ENCODE measurements at regions of chr1 and their contacts with region 1.

Region 1: DNA sequence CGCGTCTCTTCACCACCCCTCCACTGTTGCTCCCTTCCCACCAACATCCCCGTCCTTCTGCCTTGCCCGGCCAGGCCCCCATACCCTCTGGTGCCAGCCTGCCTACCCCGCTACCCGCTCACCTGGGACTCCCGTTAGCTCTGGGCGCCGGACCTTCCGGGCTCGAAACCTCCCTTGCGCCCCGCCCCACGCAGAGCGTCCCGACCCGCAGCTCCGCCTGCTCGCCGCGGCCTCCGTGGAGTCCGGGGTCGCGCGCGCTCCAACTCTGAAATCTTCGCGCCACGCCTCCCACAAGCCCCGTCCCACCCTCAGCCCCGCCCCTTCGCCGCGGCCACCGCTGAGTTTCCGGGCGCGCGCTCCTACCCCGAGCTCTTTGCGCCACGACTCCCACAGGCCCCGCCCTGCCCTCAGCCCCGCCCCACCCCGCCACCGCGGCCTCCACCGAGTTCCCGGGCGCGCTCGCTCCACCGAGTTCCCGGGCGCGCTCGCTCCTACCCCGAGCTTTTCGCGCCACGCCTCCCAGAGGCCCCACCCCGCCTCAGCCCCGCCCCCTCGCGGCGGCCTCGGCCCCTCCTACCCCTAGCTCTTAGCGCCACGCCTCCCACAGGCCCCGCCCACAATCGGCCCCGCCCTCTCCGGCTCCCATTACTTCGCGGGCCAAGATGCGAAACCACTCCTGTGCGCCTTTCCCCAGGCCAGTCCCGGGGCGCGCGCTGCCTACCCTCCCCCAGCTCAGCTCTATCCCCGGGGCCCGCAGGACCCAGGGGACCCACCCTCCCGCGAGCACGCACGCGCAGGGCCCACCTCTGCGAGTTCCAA is at the start of gene IFT25:
- DNase-seq: peak; percentile 96 to 100 (median 99)
- H3K4me3 ChIP-seq: peak within 1 kb of the TSS; percentile 84
- H3K27ac ChIP-seq: peak within 1 kb of the TSS; percentile 88 to 89
- H3K4me1 ChIP-seq: peaks cover 11% of the 10 kb centered on the region
- H3K27me3 ChIP-seq: no peaks in the 10 kb centered on the region
- CTCF ChIP-seq: no peak
- EP300 ChIP-seq: no peak
- POLR2A ChIP-seq: peak; percentile 74
- total RNA-seq, gene IFT25: 24.2 to 39.3 (median 28.5) TPM

Region 2: DNA sequence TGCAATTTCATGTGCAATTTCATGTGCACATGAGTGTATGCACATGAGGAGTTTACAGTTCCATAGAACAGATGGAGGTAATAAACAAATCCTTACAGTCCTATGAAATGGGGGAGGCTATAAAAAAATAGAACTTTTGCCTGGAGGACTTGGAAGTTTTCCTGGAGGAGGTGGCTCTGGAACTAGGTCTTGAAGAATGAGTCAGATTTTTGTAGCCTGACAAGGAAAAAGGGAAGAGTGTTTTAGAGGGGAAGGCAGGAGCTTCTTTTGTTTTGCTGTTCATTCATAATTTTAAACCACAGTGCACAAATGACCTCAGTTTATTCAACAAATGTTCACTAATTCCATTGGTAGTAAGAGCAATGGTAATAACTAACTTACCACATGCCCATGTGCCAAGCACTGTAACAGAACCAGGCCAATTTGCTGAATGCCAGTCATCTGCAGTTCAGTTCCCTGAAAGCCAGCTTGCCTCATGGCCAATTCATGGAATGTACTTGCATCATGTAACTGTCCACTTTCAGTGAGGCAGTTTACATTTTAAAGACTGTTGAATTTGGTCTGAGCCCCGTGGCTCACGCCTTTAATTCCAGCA is 48.9 kb before region 1 on chr1:
- intact Hi-C with region 1: loop called in 1 of 4 experiments (anchors 5 kb)
- DNase-seq: no peak
- H3K4me3 ChIP-seq: no peak overlapping the region
- H3K27ac ChIP-seq: no peak overlapping the region
- H3K4me1 ChIP-seq: peaks cover 5% of the 10 kb centered on the region
- H3K27me3 ChIP-seq: no peaks in the 10 kb centered on the region
- CTCF ChIP-seq: no peak
- EP300 ChIP-seq: no peak
- POLR2A ChIP-seq: no peak